ENCODE measurements at regions of chr1 and their contacts with region 1.

Region 1: GRCh38 chr1:67019600-67020136 is 34.3 kb downstream of the SLC35D1 start:
- DNase-seq: no peak
- ATAC-seq: no peak
- H3K4me3 ChIP-seq: no peak overlapping the region
- H3K4me3 Mint-ChIP-seq: no peak overlapping the region
- H3K27ac ChIP-seq: no peak overlapping the region
- H3K27ac Mint-ChIP-seq: peak overlapping the region in 2 of 9 donors; percentile 36 to 38
- H3K4me1 ChIP-seq: no peaks in the 10 kb centered on the region
- H3K4me1 Mint-ChIP-seq: peaks cover 0 to 13% (median 5%) of the 10 kb centered on the region in 7 donors
- H3K27me3 ChIP-seq: no peaks in the 10 kb centered on the region
- H3K27me3 Mint-ChIP-seq: no peaks in the 10 kb centered on the region

Region 2: DNA sequence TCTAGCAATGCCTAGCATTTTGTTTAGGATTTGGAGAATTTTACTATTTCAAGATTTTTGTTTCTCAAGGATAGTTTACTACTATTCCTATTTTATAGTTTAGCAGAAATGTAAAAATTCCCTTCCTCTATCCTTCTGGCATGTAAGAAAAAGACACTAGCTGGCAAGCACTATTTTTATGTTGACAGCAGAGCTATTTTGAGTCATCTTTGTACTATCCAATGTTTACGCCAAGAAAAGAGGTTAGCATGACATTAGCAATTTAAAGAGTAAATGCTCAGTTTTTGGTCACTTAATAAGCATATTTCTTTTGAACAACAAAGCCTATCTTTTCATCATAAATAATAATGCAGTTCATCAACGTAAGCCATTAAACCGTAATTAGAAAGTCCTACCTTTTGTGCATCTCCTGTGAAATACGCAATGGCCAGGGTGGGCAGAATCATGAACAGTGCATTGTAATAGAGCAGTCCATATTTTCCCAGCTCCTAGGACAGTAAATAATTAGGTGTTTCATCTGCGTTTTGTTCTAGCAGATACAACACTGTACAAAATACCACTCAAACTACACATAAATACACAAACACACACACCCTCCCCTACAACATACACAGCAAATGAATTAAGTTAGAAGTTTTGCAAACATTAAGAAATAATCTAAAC is 22.3 kb after region 1 on chr1:
- CTCF ChIA-PET with region 1: no interaction called
- POLR2A ChIA-PET with region 1: no interaction called
- intact Hi-C with region 1: loop called in 1 of 2 experiments (anchors 2 kb)
- DNase-seq: no peak
- ATAC-seq: no peak
- H3K4me3 ChIP-seq: no peak overlapping the region
- H3K4me3 Mint-ChIP-seq: no peak overlapping the region
- H3K27ac ChIP-seq: no peak overlapping the region
- H3K27ac Mint-ChIP-seq: no peak overlapping the region
- H3K4me1 ChIP-seq: no peaks in the 10 kb centered on the region
- H3K4me1 Mint-ChIP-seq: peaks cover 2 to 36% (median 14%) of the 10 kb centered on the region in 7 donors
- H3K27me3 ChIP-seq: no peaks in the 10 kb centered on the region
- H3K27me3 Mint-ChIP-seq: no peaks in the 10 kb centered on the region

Measured in naive thymus-derived CD4-positive, alpha-beta T cell (primary cell).